ENCODE measurements at regions of chr14 and their contacts with region 1.

Region 1: DNA sequence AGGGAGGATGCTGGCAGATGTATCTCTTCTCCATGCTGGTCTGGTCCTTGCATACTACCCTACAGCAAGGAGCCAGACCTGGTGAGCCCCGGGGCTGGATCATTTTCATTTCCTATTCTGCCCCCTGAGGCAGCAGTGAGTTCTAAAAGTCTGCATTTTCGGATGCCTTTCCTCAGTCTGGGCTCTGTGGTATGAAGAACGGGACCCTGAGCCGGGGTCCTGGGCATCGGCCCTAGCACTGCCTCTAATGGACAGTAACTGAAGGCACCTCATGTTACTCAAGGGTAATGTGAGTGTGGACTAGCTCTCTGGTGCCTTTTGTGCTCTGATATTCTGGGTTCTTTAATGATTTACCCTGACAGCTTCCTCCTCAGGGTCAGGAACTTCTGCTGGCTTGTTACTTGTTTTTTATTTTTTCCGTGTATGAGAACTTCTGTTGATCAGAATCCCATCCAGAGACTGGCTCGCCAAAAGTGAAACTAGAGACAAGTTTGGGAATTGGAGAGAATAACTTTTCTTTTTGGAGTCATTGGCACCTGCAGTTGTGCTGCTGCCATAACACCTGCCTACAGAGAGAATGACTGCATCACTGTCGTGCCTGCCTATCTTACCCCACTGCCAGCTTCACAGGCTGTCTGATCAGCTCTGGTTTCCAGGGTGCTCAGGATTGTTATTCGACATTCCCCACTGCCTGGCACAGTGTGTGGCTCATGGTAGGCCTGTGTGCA is 62.3 kb downstream of the SUSD6 start:
- DNase-seq: no peak
- H3K4me3 ChIP-seq: no peak overlapping the region
- H3K27ac ChIP-seq: peak overlapping the region; percentile 20 to 61
- H3K4me1 ChIP-seq: peaks cover 21% of the 10 kb centered on the region
- H3K27me3 ChIP-seq: no peaks in the 10 kb centered on the region
- CTCF ChIP-seq: no peak
- EP300 ChIP-seq: no peak
- POLR2A ChIP-seq: no peak

Region 2: DNA sequence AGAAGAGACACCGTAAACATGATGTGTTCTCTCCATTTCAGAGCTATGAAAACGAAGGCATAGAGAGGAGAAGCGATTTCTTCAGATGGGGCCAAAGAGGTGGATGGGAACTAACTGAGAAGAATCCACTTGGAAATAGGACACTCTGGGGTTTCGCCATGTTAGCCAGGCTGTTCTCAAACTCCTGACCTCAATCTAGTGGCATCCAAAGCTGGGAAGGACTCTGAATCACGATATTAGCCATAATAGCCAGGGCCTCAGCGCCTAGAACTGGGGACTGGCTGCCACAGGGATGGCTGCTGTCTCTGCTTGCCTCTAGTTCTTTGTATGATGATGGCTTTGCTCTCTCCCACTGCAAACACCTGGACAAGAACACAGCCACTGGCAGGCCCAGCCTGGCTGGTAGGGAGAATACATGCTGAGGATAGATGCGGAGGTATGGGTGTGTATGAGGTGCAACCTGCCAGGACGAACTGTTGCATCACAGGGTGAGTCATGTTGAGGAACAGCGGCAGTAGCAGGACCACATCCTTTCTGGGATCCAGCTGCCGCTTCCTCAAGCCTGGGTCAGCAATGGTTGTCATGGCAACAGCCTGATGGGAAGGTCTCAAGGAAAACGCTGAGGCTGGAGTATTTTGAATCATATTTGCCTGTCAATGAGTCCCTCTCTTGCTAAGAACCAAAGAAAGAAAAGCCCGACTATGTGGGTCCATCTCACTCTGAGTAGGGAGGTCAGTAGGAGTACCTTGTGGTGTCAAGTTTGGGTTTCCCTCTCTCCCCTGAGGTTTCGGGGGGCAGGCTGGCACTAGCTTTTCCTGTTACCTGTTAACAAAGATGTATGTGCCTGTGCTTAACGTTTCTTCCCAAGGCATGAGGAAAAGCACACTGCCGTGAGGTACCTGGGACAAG is 130.1 kb before region 1 on chr14:
- intact Hi-C with region 1: no loop called
- DNase-seq: no peak
- H3K4me3 ChIP-seq: no peak overlapping the region
- H3K27ac ChIP-seq: no peak overlapping the region
- H3K4me1 ChIP-seq: peaks cover 2% of the 10 kb centered on the region
- H3K27me3 ChIP-seq: no peaks in the 10 kb centered on the region
- CTCF ChIP-seq: no peak
- EP300 ChIP-seq: no peak
- POLR2A ChIP-seq: no peak

Region 3: DNA sequence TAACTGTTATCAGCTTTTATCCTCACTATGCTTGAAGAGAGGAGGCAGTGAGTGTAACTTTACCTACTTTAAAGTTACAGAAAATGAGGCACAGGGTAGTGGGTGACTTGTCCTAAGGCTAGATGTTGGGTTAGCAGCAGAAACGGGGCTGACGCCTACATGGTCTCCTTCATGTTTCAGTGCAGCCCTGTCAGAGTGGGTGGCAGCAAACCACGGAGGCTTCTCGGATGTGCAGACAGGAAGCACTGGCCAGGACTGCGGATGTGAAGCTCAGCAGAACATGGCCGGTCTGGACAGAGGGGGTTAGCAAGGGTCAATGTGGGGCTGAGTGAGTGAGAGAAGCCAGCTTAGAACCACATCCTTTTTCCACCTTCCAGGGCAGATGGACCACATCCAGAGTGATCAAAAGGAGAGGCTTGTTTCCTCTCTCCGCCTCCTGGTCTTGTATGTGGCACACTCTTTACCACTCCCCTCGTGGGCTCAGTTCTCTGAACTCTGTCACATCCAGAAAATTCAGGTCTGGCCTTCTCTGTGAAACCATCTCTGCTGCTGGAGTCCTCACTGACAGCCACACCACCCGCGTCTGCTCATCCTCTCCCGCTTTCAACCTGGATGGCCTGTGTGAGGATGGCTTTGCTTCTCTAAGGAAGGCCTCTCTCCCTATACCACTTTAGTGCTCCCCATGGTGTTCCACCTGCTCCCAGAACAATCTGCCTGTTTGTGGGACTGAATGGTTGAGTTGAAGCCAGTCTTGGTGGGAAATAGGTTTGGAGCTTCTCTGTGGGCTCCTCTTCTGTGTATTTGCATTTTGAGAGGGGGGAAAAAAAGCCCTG is 48.2 kb before region 1 on chr14:
- intact Hi-C with region 1: loop called in 1 of 4 experiments (anchors 10 kb)
- DNase-seq: no peak
- H3K4me3 ChIP-seq: no peak overlapping the region
- H3K27ac ChIP-seq: no peak overlapping the region
- H3K4me1 ChIP-seq: peaks cover 11% of the 10 kb centered on the region
- H3K27me3 ChIP-seq: no peaks in the 10 kb centered on the region
- CTCF ChIP-seq: no peak
- EP300 ChIP-seq: no peak
- POLR2A ChIP-seq: no peak

Region 4: DNA sequence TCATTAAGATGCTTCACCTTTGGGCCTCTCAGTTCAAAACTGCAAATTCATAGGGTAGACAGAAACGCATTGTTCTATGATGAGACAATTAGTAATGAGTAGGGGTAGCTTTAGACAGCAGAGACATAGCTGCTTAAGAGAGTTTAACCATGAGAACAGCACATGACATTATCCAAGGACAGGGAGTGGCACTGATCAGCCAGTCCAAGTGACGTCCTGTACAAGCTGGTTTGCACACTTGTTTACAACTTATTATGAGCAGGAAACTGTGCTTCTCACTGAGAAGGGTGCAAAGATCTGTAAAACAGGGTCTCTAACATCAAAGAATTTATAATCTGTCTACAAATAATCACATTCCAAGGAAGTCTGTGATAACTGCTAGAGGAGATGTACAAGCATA is 82.0 kb after region 1 on chr14:
- intact Hi-C with region 1: no loop called
- DNase-seq: no peak
- H3K4me3 ChIP-seq: no peak overlapping the region
- H3K27ac ChIP-seq: no peak overlapping the region
- H3K4me1 ChIP-seq: no peaks in the 10 kb centered on the region
- H3K27me3 ChIP-seq: no peaks in the 10 kb centered on the region
- CTCF ChIP-seq: no peak
- EP300 ChIP-seq: no peak
- POLR2A ChIP-seq: no peak

Region 5: DNA sequence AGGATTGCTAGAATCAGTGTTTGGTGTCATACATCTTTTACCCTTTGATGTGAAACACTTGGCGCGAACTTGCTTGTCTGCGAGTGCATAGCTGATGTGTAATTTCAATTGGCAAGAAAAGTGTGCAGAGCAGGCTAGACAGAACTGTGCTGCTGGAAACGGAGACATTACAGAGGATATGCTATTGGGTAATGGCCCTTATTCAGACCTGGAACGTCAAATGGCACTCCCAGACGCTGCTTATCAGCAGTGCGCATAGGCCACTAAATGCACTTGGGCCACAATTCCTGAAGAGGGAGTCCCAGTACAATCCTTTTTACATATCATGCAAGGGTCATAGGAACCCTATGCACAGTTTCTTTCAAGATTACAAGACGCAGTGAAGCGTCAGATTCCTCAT is 139.0 kb after region 1 on chr14:
- intact Hi-C with region 1: no loop called
- DNase-seq: no peak
- H3K4me3 ChIP-seq: no peak overlapping the region
- H3K27ac ChIP-seq: no peak overlapping the region
- H3K4me1 ChIP-seq: no peaks in the 10 kb centered on the region
- H3K27me3 ChIP-seq: no peaks in the 10 kb centered on the region
- CTCF ChIP-seq: no peak
- EP300 ChIP-seq: no peak
- POLR2A ChIP-seq: no peak

Measured in ovary (tissue), 10 donors.